CD4-positive, alpha-beta memory T cell (primary cell): ENCODE measurements at regions of chr1 and their contacts with region 1.

Region 1: DNA sequence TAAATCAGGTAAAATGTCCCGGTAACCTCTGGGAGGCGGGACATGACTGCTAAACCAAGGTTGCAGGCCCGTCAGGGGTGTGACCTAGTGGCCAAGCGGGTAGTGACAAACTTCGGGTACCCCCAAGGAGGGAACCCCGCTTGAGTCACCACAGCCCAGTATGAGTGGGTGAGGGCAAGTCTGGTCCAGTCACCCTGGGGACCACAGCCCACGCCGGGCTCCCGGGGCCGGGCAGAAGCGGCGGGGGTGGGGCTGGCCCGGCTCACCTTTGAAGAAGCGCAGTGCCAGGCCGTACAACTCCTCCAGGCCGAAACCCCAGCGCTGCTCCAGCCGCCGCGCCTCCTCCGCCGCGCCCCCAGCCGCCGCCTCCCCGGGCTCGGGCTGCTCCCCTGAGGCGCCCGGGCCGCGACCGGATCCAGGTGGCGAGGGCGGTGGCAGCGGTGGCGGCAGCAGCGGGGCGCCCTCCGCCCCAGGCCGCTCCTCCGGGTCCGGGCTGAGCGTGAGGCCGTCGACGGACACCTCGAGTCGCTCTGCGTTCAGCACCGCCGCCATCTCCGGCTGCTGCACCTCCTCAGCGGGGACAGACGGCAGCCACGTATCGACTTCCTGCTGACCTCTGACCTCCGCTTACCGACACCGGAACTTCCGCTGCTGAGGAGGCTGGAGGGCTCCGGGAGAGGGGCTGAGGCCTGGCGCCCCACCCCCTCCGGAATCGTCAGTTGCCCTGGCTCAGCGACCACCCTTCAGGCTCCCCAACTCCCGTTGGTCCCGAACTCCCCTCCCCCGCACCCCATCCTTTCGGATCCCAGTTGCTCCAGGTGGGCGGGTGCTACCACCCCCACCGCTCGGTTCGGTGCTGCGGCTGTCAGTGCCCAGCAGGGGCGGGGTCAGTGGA is at the start of gene ACBD3:
- DNase-seq: peak; percentile 82 to 91 (median 84)
- H3K4me3 ChIP-seq: peak within 1 kb of the TSS; percentile 98 to 99
- H3K4me3 Mint-ChIP-seq: peak within 1 kb of the TSS; percentile 92 to 98 (median 95)
- H3K27ac ChIP-seq: peak within 1 kb of the TSS; percentile 70
- H3K27ac Mint-ChIP-seq: peak within 1 kb of the TSS; percentile 90 to 97 (median 95)
- H3K4me1 ChIP-seq: peaks cover 43% of the 10 kb centered on the region
- H3K4me1 Mint-ChIP-seq: peaks cover 23 to 40% (median 31%) of the 10 kb centered on the region in 4 donors
- H3K27me3 ChIP-seq: no peaks in the 10 kb centered on the region
- H3K27me3 Mint-ChIP-seq: no peaks in the 10 kb centered on the region
- total RNA-seq, gene ACBD3: 28.7 to 29.7 TPM

Region 2: GRCh38 chr1:226215239-226215638 is 28.9 kb after region 1 on chr1:
- CTCF ChIA-PET with region 1: no interaction called
- POLR2A ChIA-PET with region 1: no interaction called
- intact Hi-C with region 1: no loop called
- DNase-seq: no peak
- H3K4me3 ChIP-seq: no peak overlapping the region
- H3K4me3 Mint-ChIP-seq: no peak overlapping the region
- H3K27ac ChIP-seq: no peak overlapping the region
- H3K27ac Mint-ChIP-seq: no peak overlapping the region
- H3K4me1 ChIP-seq: no peaks in the 10 kb centered on the region
- H3K4me1 Mint-ChIP-seq: no peaks in the 10 kb centered on the region
- H3K27me3 ChIP-seq: no peaks in the 10 kb centered on the region
- H3K27me3 Mint-ChIP-seq: peaks cover 0 to 7% of the 10 kb centered on the region in 2 donors

Region 3: GRCh38 chr1:226308723-226309315 is 122.4 kb after region 1 on chr1 and contains the start of gene LIN9:
- CTCF ChIA-PET with region 1: no interaction called
- POLR2A ChIA-PET with region 1: interaction called, 3 read pairs
- intact Hi-C with region 1: loop called (anchors 5 kb)
- DNase-seq: peak; percentile 85 to 91 (median 87)
- H3K4me3 ChIP-seq: peak within 1 kb of the TSS; percentile 84 to 85
- H3K4me3 Mint-ChIP-seq: peak within 1 kb of the TSS; percentile 91 to 95 (median 92)
- H3K27ac ChIP-seq: peak within 1 kb of the TSS; percentile 70
- H3K27ac Mint-ChIP-seq: peak within 1 kb of the TSS; percentile 78 to 93 (median 89)
- H3K4me1 ChIP-seq: peaks cover 10% of the 10 kb centered on the region
- H3K4me1 Mint-ChIP-seq: peaks cover 12 to 20% (median 15%) of the 10 kb centered on the region in 4 donors
- H3K27me3 ChIP-seq: no peaks in the 10 kb centered on the region
- H3K27me3 Mint-ChIP-seq: peaks cover 5 to 7% of the 10 kb centered on the region in 2 donors
- total RNA-seq, gene LIN9: 5.0 to 5.5 TPM